ENCODE measurements at regions of chr5 and their contacts with region 1.

Region 1: DNA sequence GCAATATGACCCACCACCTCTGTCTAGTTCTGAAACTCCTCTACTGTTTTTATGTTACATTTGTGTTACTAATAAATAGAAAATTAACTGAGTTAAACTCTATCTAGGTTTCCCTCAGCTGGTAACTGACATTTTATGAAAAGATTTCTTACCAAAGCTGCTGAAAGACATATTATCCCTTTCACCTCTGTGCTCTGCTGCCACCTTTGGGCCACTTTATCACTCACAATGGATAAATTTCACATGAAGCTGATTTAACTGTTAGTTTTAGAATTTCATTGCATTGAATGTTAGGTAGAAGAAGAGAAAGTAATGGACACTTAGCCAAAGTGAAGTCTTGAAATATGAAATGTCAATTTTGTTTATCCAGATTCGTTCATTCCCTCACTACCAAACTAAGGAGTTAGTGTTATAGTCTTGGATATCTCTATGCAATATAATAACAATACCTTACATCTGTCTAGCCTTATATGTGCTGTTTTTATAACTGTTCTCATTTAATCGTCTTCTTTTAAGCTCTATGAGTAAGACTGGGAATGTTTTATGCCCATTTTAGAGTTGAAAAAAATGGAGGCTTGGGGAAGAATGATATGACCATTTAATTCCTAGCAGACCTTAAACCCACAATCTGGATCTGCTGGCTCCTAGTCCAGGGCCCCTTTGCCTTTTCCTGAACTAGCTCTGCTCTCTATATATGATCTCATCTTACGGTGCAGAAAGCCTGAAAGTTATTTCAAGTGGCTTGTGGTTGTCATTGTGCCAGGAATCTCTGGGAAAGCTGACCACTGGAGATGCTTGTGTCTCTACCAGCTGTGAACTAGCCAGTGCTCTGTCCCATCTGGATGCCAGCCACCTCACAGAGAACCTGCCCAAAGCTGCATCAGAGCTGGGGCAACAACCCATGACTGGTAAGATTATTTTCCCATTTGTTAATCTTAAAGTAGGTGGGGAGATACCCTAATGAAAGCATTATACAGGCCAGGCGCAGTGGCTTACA is 97.1 kb downstream of the GOLPH3 start:
- DNase-seq: peak in 30 of 35 experiments; percentile 5 to 63 (median 34)
- ATAC-seq: peak in 2 of 4 experiments; percentile 38 to 42
- H3K4me3 ChIP-seq: no peak overlapping the region
- H3K4me3 Mint-ChIP-seq: no peak overlapping the region
- H3K27ac ChIP-seq: no peak overlapping the region
- H3K27ac Mint-ChIP-seq: no peak overlapping the region
- H3K4me1 ChIP-seq: no peaks in the 10 kb centered on the region
- H3K4me1 Mint-ChIP-seq: no peaks in the 10 kb centered on the region
- H3K27me3 ChIP-seq: no peaks in the 10 kb centered on the region
- H3K27me3 Mint-ChIP-seq: no peaks in the 10 kb centered on the region

Region 2: DNA sequence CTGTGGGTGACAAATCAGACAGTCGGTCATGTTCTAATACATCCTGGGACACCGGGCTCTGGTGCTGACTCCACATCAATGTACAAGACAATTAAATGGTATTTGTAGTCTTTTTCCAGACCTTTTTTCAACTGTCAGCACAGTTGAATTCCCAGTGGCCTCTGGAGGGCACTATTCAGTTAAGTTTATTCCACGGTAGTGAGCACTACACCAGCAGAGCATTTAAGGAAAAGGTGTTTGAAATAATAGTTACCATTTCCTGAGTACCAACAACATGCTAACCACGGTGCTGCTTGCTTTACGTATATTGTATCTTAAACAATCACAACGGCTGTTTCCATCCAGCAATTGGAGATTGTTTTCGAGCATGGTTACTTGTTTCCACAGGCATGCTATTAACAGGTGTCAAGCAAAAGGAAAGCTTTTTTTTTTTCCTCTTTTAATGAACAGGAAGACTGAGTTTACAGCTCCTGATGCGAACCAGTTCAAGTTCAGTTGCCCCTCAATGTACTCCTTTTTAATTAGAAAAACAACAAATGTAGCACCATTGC is 251.4 kb before region 1 on chr5:
- CTCF ChIA-PET with region 1: interaction called, 10 to 13 read pairs
- POLR2A ChIA-PET with region 1: no interaction called
- DNase-seq: peak in 30 of 35 experiments; percentile 2 to 65 (median 25)
- ATAC-seq: peak; percentile 64 to 96 (median 81)
- H3K4me3 ChIP-seq: no peak overlapping the region
- H3K4me3 Mint-ChIP-seq: peak overlapping the region in 2 of 3 donors; percentile 34 to 37
- H3K27ac ChIP-seq: no peak overlapping the region
- H3K27ac Mint-ChIP-seq: no peak overlapping the region
- H3K4me1 ChIP-seq: peaks cover 0 to 5% of the 10 kb centered on the region in 2 experiments
- H3K4me1 Mint-ChIP-seq: peaks cover 2 to 8% (median 6%) of the 10 kb centered on the region in 3 donors
- H3K27me3 ChIP-seq: no peaks in the 10 kb centered on the region
- H3K27me3 Mint-ChIP-seq: peaks cover 0 to 10% of the 10 kb centered on the region in 2 donors